Naive thymus-derived CD8-positive, alpha-beta T cell (primary cell): ENCODE measurements at regions of chr16 and their contacts with region 1.

Region 1: DNA sequence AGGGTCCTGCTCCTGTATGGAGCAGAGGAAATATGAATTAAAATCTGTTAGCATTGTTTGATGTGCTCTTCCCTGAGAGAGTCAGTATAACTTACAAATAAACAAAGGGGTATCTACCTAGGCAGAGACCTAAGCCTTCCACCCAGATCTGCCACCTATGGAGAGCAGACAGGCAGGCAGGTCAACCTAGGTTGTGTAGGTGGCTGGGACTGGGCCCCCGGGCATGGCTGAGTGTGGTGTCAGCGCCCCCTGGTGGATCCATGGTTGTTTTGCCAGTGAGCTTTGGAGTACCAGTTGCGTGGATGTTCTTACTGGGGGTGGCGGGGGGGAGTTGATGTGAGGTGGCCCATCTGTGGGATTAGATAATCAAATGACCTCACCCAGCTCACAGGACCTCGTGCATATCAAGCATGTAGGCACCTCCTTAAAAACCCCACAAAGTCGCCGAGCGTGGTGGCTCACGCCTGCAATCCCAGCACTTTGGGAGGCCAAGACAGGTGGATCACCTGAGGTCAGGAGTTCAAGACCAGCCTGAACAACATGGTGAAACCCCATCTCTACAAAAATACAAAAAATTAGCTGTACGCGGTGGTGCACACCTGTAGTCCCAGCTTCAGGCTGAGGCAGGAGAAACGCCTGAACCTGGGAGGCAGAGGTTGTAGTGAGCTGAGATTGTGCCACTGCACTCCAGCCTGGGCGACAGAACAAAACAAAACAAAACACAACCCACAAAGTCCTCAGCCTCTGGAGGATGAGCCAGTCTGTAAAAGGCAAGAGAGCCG is 17.6 kb downstream of the DUS2 start:
- DNase-seq: peak; percentile 78 to 95 (median 88)
- ATAC-seq: peak; percentile 99 to 100
- H3K4me3 Mint-ChIP-seq: peak overlapping the region in 2 of 10 donors; percentile 27 to 47
- H3K27ac Mint-ChIP-seq: peak overlapping the region in 9 of 10 donors; percentile 21 to 92 (median 66)
- H3K4me1 Mint-ChIP-seq: peaks cover 5 to 35% (median 11%) of the 10 kb centered on the region in 4 donors
- H3K27me3 Mint-ChIP-seq: no peaks in the 10 kb centered on the region

Region 2: GRCh38 chr16:67993189-67994039 is 47.3 kb before region 1 on chr16:
- POLR2A ChIA-PET with region 1: interaction called, 48 read pairs
- DNase-seq: peak; percentile 71 to 87 (median 82)
- ATAC-seq: peak; percentile 90 to 91
- H3K4me3 Mint-ChIP-seq: peak overlapping the region; percentile 82 to 94 (median 90)
- H3K27ac Mint-ChIP-seq: peak overlapping the region; percentile 92 to 99 (median 97)
- H3K4me1 Mint-ChIP-seq: peaks cover 20 to 56% (median 44%) of the 10 kb centered on the region in 4 donors
- H3K27me3 Mint-ChIP-seq: no peaks in the 10 kb centered on the region

Region 3: DNA sequence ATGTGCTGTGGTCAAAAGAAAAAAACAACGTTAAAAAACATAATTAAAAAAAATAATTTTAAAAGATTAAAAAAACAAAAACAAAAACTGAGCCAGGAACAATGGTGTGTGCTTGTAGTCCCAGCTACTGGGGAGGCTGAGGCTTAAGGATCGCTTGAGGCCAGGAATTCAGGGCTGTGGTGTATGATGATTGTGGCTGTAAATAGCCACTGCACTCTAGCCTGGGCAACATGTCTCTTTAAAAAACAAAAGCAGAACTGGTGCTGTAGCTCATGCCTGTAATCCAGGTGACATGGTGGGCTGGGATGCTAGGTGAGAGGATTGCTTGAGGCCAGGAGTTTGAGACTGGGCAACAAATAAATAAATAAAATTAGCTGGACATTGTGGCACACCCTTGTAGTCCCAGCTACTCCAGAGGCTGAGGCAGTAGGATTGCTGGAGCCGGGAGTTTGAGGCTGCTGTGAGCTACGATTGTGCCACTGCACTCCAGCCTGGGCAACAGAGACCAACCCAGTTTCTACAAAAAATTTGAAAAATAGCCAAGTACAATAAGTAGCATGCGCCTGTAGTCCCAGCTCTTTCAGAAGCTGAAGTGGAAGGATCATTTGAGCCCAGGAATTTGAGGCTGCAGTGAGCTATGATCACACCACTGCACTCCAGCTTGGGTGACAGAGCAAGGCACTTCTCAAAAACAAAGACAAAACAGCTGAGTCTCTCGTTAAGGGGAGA is 88.0 kb after region 1 on chr16:
- POLR2A ChIA-PET with region 1: no interaction called
- DNase-seq: no peak
- ATAC-seq: no peak
- H3K4me3 Mint-ChIP-seq: peak overlapping the region in 2 of 10 donors; percentile 37 to 51
- H3K27ac Mint-ChIP-seq: peak overlapping the region; percentile 81 to 90 (median 86)
- H3K4me1 Mint-ChIP-seq: peaks cover 19 to 78% (median 64%) of the 10 kb centered on the region in 4 donors
- H3K27me3 Mint-ChIP-seq: no peaks in the 10 kb centered on the region